ENCODE measurements at regions of chrX and their contacts with region 1.

Region 1: DNA sequence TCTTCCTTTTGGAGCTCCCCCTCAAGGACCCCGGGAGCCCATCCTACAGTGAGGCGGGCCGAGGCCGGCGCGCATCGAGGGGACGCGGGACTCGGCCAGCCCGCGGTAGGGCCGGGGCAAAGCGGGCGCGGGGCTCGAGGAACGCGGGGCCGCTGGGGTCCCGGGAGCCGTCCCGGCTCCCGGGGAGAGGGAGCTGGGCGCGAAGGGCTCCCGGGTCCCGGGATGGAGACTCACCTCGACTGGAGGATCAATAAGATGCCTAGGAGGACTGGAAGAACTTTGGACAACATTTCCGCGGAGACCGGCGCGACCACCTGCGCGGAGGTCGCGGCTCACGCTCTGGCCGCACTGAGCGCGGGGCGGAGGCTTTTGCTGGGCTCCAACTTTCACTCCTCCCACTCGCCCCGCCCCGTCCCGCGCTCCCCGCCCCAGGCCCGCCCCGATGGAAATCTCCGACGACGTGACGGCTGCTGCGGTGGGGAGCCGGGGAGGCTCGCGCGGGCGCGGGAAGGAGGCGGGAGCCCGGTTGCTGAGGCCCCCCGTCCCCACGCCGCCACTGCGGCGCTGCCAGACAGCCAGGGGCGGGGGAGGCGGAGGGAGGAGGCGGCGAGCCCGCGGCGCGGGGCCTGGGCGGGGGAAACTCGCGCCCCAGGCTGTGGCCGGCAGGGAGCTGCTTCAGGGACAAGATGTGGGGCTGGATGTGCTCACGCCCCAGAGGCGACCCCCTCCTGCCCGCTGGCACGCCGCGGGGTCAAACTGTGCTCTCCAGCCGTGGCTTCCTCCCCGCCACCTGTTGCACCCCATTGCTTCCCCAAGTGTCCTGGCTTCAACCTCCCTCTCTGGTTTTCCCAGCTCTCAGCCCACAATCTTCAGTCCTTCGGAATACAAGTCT is at the start of gene GABRE:
- DNase-seq: peak; percentile 31 to 85
- H3K4me3 ChIP-seq: peak within 1 kb of the TSS; percentile 76 to 78
- H3K27ac ChIP-seq: peak within 1 kb of the TSS; percentile 83 to 95
- H3K4me1 ChIP-seq: peaks cover 0 to 30% (median 2%) of the 10 kb centered on the region in 4 donors
- H3K27me3 ChIP-seq: no peaks in the 10 kb centered on the region
- CTCF ChIP-seq: no peak

Region 2: DNA sequence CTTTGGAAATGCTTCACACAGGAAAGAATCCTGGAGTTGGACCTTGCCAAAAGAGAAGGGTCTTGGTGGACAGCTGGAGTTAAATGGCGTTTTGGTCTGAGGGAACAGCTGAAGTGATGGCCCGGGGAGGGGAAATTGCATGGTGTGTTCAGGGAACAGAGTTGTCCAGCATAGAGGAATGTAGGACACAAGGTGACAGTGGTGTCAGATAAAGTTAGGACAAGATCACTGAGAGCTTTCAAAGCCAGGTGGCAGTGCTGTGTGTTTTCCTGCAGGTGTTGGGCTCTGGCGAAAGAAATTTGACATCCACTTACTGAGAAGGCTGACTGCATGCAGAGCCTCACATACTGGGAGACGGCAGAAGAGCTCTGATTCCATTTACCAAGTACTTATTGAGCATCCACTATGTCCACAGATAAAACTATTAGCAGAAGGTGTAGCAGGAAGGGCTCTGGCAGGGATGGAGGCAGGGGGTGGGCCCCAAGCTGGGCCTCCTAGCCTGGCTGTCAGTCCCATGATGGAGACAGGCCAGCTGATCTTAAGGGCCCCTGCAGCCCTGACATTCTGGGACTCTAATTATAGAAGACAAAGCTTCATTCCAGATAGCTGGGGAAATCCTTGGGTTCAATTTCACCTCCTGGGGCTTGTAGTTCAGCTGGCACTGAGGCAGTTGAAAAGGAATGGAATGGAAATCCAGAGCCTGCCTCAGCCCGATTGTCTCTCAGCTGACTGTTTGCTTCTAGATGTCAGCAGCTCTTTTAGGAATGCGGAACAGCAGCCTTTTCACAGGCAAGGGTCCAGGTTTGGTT is 1761.7 kb before region 1 on chrX:
- intact Hi-C with region 1: no loop called
- DNase-seq: no peak
- H3K4me3 ChIP-seq: no peak overlapping the region
- H3K27ac ChIP-seq: no peak overlapping the region
- H3K4me1 ChIP-seq: peaks cover 0 to 5% (median 0%) of the 10 kb centered on the region in 4 donors
- H3K27me3 ChIP-seq: no peaks in the 10 kb centered on the region
- CTCF ChIP-seq: no peak

Region 3: GRCh38 chrX:151396825-151397740 is 577.5 kb before region 1 on chrX and contains the start of gene VMA21:
- intact Hi-C with region 1: loop called (anchors 10 kb)
- DNase-seq: peak; percentile 87 to 94
- H3K4me3 ChIP-seq: peak within 1 kb of the TSS; percentile 67 to 76
- H3K27ac ChIP-seq: peak within 1 kb of the TSS; percentile 92 to 97
- H3K4me1 ChIP-seq: peaks cover 0 to 16% (median 2%) of the 10 kb centered on the region in 4 donors
- H3K27me3 ChIP-seq: no peaks in the 10 kb centered on the region
- CTCF ChIP-seq: no peak

Measured in tibial artery (tissue), 4 donors.